Right ventricle myocardium inferior (tissue), 1 donor: ENCODE measurements at regions of chr2 and their contacts with region 1.

Region 1: GRCh38 chr2:46364797-46365457 is 67.7 kb downstream of the EPAS1 start:
- DNase-seq: no peak
- ATAC-seq: peak; percentile 45

Region 2: GRCh38 chr2:46010925-46011490 is 353.9 kb before region 1 on chr2:
- intact Hi-C with region 1: loop called (anchors 5 kb)
- DNase-seq: no peak
- ATAC-seq: no peak

Region 3: DNA sequence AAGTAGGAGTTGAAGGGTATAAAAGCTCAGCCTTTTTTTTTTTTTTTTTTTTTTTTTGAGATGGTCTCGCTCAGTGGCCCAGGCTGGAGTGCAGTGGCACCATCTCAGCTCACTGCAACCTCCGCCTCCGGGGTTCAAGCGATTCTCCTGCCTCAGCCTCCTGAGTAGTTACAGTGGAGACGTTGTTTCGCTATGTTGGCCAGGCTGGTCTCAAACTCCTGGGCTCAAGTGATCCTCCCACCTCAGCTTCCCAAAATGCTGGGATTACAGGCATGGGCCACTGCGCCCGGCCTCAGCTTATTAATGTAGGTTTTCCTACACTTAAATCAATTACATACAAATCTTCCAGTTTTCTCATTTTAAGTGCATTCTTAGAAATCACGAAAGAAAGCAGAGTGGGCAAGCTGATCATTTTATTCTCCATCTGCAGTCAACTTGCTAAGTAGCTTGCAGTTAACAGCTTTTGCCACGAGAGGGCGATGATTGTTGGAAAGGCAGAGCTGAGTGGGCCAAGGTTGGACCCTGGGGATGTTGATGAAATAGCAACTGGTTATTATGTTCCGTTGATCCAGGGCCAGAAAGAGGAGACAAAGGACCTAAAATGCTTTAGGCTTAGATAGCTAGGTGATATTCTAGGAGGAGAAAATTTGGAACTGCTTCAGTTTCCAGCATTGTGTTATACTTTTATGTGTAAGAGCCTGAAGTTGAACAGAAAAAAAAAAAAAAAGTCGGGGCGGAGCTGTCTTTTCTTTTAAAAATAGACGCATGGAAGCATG is 302.1 kb before region 1 on chr2:
- intact Hi-C with region 1: loop called (anchors 2 kb)
- DNase-seq: peak; percentile 78
- ATAC-seq: peak; percentile 77

Region 4: DNA sequence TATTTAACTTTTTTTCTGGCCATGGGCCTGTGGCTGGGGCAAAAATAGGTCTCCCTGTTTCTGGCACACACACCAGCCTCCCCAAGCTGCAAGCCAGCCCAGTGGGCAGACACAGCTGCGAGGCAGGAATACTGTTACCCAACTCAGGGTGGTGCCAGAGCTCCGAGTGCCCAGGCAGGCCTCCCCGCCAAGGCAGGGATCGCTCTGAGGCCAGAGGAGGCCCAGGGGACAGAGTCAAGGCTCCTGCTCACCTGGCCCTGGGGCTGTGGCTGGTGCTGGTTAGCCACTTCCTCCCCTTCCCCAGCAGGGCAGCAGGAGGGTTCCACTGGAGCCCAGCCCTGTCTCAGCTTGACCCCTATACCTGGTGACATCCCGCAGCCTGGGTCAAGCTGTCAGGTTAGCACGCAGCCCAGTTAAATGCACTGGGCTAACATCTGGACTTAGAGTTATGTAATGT is 134.8 kb before region 1 on chr2:
- intact Hi-C with region 1: loop called (anchors 2 kb)
- DNase-seq: peak; percentile 61
- ATAC-seq: peak; percentile 83